MCF 10A (cell line): ENCODE measurements at regions of chr4 and their contacts with region 1.

Region 1: DNA sequence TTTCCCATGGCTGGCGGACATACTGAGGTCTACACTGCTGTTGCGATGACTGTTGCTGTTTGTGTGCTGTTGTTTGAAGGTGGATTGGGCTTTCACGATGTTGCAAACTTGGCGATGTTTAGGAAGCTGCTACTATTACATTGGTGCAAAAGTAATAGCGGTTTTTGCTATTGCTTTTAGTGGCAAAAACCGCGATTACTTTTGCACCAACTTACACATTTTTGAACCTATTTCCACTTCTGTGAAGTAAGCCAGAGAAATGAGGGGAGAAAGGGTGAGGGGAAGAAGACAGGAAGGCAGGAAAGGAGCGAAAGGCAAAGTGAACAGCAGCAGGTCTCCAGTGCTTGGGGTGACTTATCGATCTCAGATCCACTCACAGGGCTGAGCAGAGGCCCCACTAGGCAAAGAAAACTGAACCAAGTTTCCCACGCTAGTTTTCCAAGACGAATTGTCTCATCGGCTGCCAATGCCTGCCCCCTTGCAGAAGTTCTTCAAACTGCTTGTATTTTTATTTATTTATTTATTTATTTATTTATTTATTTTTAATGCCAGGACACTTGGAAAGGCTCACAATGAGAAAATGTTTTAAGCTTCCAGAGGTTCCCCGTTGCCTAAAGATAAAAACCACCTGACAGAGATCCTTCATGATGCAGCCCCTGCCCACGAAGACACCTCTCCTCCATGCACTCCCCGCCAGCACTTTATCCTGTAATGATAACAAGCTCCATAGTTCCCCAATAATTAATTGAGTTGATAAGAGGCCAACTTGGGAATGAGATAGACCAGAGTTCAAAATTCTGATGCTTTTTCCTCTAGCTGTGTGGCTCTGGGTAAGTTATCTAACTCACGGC is 43.3 kb downstream of the QDPR start:
- DNase-seq: peak; percentile 56
- H3K4me3 Mint-ChIP-seq: no peak overlapping the region
- H3K27ac Mint-ChIP-seq: no peak overlapping the region
- H3K4me1 Mint-ChIP-seq: no peaks in the 10 kb centered on the region
- H3K27me3 Mint-ChIP-seq: no peaks in the 10 kb centered on the region
- CTCF ChIP-seq: peak; percentile 50

Region 2: GRCh38 chr4:17356926-17357325 is 111.7 kb before region 1 on chr4:
- CTCF ChIA-PET with region 1: interaction called, 12 read pairs
- POLR2A ChIA-PET with region 1: no interaction called
- intact Hi-C with region 1: no loop called
- DNase-seq: no peak
- H3K4me3 Mint-ChIP-seq: no peak overlapping the region
- H3K27ac Mint-ChIP-seq: no peak overlapping the region
- H3K4me1 Mint-ChIP-seq: no peaks in the 10 kb centered on the region
- H3K27me3 Mint-ChIP-seq: peaks cover 44% of the 10 kb centered on the region
- CTCF ChIP-seq: no peak

Region 3: DNA sequence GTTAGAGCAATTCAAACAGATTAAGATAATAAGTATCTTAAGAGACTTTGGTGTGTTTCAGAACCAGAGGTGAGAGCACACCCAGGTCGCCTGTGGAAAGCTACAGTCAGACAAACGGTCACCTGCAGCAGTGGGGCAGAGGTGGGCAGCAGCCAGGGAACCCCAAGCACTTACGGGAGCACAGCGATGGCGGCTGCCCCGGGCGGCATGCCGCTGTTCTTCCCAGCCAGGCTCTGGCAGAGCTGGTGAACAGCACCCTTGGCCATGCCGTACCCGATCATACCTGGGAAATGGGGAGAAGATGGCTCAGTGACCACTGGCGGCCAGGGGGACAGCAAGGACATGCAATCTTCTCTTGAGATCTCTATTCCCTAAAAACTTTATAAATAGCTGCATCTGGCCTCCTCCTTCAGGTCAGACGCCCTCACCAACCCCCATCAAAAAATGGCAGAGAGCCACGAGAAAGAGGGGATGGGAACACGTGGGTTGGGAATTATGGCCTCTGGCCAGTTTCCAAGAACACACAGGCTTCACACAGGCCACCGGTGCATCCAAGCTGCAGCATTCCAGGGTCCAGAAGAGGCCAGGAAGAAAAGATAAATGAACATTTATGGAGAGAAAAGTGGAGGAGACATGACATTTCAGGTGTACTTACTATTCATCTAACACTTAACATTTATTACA is 23.6 kb after region 1 on chr4:
- CTCF ChIA-PET with region 1: interaction called, 13 read pairs
- POLR2A ChIA-PET with region 1: no interaction called
- intact Hi-C with region 1: no loop called
- DNase-seq: peak; percentile 23
- H3K4me3 Mint-ChIP-seq: no peak overlapping the region
- H3K27ac Mint-ChIP-seq: no peak overlapping the region
- H3K4me1 Mint-ChIP-seq: peaks cover 9% of the 10 kb centered on the region
- H3K27me3 Mint-ChIP-seq: no peaks in the 10 kb centered on the region
- CTCF ChIP-seq: no peak

Region 4: GRCh38 chr4:17721496-17722355 is 253.1 kb after region 1 on chr4:
- CTCF ChIA-PET with region 1: no interaction called
- POLR2A ChIA-PET with region 1: no interaction called
- intact Hi-C with region 1: no loop called
- DNase-seq: peak; percentile 38
- H3K4me3 Mint-ChIP-seq: no peak overlapping the region
- H3K27ac Mint-ChIP-seq: no peak overlapping the region
- H3K4me1 Mint-ChIP-seq: peaks cover 20% of the 10 kb centered on the region
- H3K27me3 Mint-ChIP-seq: no peaks in the 10 kb centered on the region
- CTCF ChIP-seq: no peak

Region 5: GRCh38 chr4:17797808-17798207 is 329.2 kb after region 1 on chr4:
- CTCF ChIA-PET with region 1: no interaction called
- POLR2A ChIA-PET with region 1: no interaction called
- intact Hi-C with region 1: no loop called
- DNase-seq: no peak
- H3K4me3 Mint-ChIP-seq: no peak overlapping the region
- H3K27ac Mint-ChIP-seq: no peak overlapping the region
- H3K4me1 Mint-ChIP-seq: peaks cover 6% of the 10 kb centered on the region
- H3K27me3 Mint-ChIP-seq: no peaks in the 10 kb centered on the region
- CTCF ChIP-seq: no peak

Region 6: DNA sequence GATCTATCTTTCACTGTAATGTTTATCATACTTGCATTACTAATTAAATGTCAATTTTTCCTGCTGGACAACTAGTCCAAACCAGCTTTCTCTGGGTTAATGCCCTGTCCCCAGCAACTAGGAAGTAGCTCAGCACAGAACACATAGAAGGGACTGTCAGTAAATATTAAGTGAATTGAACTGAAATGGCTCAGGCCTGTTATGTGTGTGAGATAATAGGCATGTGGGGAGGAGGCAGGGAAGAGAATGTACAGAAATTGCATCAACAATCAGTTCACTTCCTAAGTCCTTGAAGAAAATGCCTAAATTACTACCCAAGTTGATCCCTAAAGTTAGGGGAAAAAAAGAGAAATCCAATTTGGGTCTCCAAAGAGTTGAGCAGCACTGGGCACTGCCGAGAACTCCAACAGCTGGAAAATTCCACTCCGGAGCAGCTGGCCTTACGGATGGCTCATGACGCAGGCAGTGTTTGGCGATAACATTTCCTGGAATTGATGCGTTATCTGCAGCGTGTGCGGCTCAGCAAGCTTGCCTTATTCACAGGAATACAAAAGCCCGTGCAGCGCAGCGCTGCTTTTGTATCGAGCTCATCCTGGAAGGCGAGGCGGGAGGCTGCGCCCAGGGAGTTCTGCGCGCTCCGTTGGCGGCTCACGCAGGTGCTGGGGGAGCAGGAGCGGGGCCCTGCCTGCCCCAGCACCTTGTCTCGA is 850.2 kb after region 1 on chr4:
- CTCF ChIA-PET with region 1: no interaction called
- POLR2A ChIA-PET with region 1: no interaction called
- intact Hi-C with region 1: no loop called
- DNase-seq: no peak
- H3K4me3 Mint-ChIP-seq: no peak overlapping the region
- H3K27ac Mint-ChIP-seq: no peak overlapping the region
- H3K4me1 Mint-ChIP-seq: no peaks in the 10 kb centered on the region
- H3K27me3 Mint-ChIP-seq: no peaks in the 10 kb centered on the region
- CTCF ChIP-seq: no peak